Activated T-helper 2 cell treated with anti-CD3 and anti-CD28 coated beads, Interferon-gamma antibody, Interleukin-2, Interleukin-4, amounts not matched to agents 10 μg/mL and 5 μg/mL and 100 μg/mL, durations not matched to agents 14 hours and 24 hours and 36 hours (primary cell): ENCODE measurements at regions of chr12 and their contacts with region 1.

Region 1: DNA sequence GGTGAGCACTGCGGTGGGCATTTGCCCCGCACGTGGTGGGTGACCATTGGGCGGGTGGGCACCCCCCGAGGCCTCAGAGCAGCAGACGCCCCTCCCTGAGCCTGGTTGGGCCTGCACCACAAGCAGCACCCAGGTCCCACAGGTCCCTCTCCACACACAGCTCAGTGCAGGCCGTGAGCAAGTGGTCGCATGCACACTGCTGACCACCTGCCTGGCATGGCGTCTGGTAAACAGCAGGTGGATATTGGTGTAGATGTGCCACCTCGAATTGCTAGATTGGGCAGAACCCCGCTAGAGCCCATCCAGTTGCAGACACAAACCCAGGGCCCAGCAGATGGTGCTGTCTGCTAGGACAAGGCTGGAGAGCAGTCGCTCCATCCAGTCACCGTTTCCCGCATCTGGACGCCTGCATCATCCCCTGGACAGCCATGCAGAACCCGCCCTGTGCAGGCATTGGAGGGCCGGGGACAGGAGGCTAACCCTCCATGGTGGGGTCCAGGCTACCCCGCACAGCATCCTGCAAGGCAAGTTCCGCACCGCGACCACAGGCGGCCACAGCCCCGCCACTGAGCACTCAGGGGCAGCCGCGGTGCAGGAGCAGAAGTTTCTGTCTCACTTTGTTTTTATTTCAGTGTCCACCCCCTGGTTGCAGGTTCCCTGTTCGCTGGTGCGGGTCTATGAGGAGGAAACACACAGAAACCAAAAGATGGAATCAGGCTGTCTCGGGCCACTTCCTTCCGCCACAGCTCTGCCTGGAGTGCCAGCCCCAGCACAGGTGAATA is 45.6 kb upstream of the RIMBP2 start:
- DNase-seq: peak; percentile 22
- H3K4me3 Mint-ChIP-seq: no peak overlapping the region
- H3K27ac Mint-ChIP-seq: no peak overlapping the region
- H3K4me1 Mint-ChIP-seq: peaks cover 4% of the 10 kb centered on the region
- H3K27me3 Mint-ChIP-seq: no peaks in the 10 kb centered on the region

Region 2: GRCh38 chr12:130747867-130748740 is 13.6 kb before region 1 on chr12:
- intact Hi-C with region 1: no loop called
- DNase-seq: peak; percentile 58
- H3K4me3 Mint-ChIP-seq: no peak overlapping the region
- H3K27ac Mint-ChIP-seq: no peak overlapping the region
- H3K4me1 Mint-ChIP-seq: peaks cover 1% of the 10 kb centered on the region
- H3K27me3 Mint-ChIP-seq: peaks cover 7% of the 10 kb centered on the region

Region 3: DNA sequence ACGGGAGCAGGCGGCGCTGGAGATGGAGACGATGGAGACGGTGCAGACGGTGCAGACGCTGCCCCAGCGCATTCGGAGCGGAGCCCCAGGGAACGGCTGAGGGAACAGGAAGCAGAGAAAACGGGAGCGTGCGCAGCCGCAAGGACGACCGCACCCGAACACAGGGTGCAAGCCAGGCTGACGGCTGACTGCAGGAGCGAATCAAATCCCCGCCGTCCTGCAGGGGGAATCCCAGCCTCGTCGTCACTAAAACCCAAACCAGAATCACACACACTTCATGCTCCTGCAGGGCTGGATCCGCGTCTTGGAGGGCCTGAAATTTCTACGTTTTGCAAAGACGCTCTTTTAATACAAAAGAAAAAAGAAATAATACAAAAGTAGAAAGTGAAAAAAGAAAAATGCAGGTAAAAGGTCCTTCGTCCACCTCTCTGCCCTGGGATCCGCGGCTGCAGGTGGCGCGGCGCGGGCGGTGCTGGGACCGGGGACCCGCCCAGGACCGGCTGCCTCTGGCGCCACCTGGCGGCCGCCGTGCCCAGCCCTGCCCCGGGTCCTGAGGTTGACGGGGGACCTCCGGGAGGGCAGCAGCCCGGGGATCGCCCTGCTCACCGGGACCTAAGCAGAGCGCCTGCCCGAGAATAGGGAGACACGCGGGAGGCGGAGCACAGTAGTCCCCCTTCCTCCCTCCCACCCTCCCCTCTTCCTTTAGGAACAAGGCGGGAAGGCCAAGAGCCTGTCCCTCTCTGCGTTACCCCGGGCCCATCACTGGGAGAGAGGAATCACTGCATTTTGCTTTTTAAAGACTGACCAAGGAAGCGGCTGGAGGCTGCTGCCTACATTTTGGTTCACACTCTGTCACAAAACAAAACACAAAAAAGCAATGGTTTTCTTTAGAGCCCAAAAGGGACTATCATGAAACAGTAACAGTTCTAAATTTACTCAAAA is 57.2 kb after region 1 on chr12:
- intact Hi-C with region 1: loop called (anchors 1 kb)
- DNase-seq: peak; percentile 60
- H3K4me3 Mint-ChIP-seq: peak overlapping the region; percentile 80
- H3K27ac Mint-ChIP-seq: peak overlapping the region; percentile 27
- H3K4me1 Mint-ChIP-seq: peaks cover 7% of the 10 kb centered on the region
- H3K27me3 Mint-ChIP-seq: no peaks in the 10 kb centered on the region

Region 4: DNA sequence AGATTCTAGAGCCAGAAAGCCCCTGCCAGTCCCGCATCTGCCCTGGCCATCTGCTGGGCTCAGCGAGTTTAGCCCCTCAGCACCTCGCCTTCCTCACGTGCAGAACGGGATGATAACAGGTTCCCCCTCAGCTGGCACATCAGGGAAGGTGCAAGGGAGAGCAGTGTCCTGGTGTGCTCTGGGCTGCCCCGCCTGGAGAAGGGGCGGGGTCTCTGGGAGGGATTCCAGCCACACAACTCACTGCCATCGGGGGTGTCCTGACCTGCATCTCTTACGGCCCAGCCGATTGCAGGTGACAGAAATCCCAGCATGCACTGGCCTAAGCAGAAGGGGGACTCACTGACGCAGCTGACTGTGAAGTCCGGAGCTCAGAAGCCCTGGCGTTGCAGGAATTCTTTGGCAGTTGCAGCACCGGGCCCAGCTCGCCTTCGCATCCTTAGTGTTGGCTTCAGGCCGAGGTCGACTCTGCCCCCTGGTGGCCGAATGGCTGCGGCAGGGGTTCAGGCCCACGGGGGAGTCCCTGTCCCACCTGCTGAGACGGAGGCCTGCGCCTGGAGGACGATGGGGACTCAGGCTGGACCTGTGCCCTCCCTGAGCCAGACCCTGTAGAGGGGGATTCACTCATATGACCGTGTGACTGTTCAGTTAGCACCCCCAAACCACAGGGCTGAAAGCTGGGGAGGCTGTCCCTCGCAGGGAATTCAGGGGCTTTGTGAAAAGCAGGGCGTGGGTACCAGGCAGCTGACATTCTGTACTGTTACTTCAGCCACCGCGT is 370.6 kb after region 1 on chr12:
- intact Hi-C with region 1: loop called (anchors 5 kb)
- DNase-seq: peak; percentile 49
- H3K4me3 Mint-ChIP-seq: no peak overlapping the region
- H3K27ac Mint-ChIP-seq: no peak overlapping the region
- H3K4me1 Mint-ChIP-seq: peaks cover 1% of the 10 kb centered on the region
- H3K27me3 Mint-ChIP-seq: no peaks in the 10 kb centered on the region